ENCODE measurements at regions of chr18 and their contacts with region 1.

Region 1: GRCh38 chr18:34976899-34977837 is 64.0 kb upstream of the MAPRE2 start:
- DNase-seq: peak; percentile 62 to 74
- H3K4me3 ChIP-seq: peak overlapping the region; percentile 72
- H3K4me3 Mint-ChIP-seq: peak overlapping the region; percentile 77
- H3K27ac Mint-ChIP-seq: peak overlapping the region; percentile 48
- H3K4me1 ChIP-seq: no peaks in the 10 kb centered on the region
- H3K4me1 Mint-ChIP-seq: no peaks in the 10 kb centered on the region
- H3K27me3 ChIP-seq: no peaks in the 10 kb centered on the region
- H3K27me3 Mint-ChIP-seq: no peaks in the 10 kb centered on the region
- CTCF ChIP-seq: no peak

Region 2: GRCh38 chr18:34857320-34857719 is 119.8 kb before region 1 on chr18:
- CTCF ChIA-PET with region 1: no interaction called
- POLR2A ChIA-PET with region 1: no interaction called
- intact Hi-C with region 1: no loop called
- DNase-seq: no peak
- H3K4me3 ChIP-seq: no peak overlapping the region
- H3K4me3 Mint-ChIP-seq: no peak overlapping the region
- H3K27ac Mint-ChIP-seq: no peak overlapping the region
- H3K4me1 ChIP-seq: no peaks in the 10 kb centered on the region
- H3K4me1 Mint-ChIP-seq: no peaks in the 10 kb centered on the region
- H3K27me3 ChIP-seq: no peaks in the 10 kb centered on the region
- H3K27me3 Mint-ChIP-seq: no peaks in the 10 kb centered on the region
- CTCF ChIP-seq: no peak

Region 3: GRCh38 chr18:34880882-34881834 is 96.0 kb before region 1 on chr18:
- CTCF ChIA-PET with region 1: no interaction called
- POLR2A ChIA-PET with region 1: no interaction called
- intact Hi-C with region 1: loop called (anchors 1 kb)
- DNase-seq: no peak
- H3K4me3 ChIP-seq: no peak overlapping the region
- H3K4me3 Mint-ChIP-seq: no peak overlapping the region
- H3K27ac Mint-ChIP-seq: no peak overlapping the region
- H3K4me1 ChIP-seq: no peaks in the 10 kb centered on the region
- H3K4me1 Mint-ChIP-seq: no peaks in the 10 kb centered on the region
- H3K27me3 ChIP-seq: no peaks in the 10 kb centered on the region
- H3K27me3 Mint-ChIP-seq: no peaks in the 10 kb centered on the region
- CTCF ChIP-seq: peak in 1 of 2 experiments; percentile 18

Region 4: DNA sequence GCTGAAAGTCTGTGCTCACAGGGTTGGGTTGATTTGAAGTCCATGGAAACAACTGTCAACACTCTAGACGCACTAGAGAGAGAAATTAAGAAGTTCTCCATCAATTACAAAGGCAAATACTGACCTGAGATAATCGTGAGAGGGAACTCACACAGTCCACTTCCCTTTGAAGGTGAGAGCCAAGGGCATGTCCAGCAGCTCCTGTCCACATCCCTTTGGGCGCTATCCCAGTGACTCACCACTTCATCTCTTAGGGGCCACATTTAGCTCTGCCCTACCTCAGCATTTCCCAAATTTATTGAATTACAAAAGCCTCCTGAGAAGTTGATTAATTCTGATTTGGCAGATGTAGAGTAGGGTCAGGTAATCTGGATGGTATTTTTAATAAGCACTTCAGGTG is 84.8 kb before region 1 on chr18:
- CTCF ChIA-PET with region 1: no interaction called
- POLR2A ChIA-PET with region 1: no interaction called
- intact Hi-C with region 1: no loop called
- DNase-seq: no peak
- H3K4me3 ChIP-seq: no peak overlapping the region
- H3K4me3 Mint-ChIP-seq: no peak overlapping the region
- H3K27ac Mint-ChIP-seq: no peak overlapping the region
- H3K4me1 ChIP-seq: no peaks in the 10 kb centered on the region
- H3K4me1 Mint-ChIP-seq: no peaks in the 10 kb centered on the region
- H3K27me3 ChIP-seq: no peaks in the 10 kb centered on the region
- H3K27me3 Mint-ChIP-seq: no peaks in the 10 kb centered on the region
- CTCF ChIP-seq: no peak

Region 5: GRCh38 chr18:34912010-34912721 is 65.0 kb before region 1 on chr18:
- CTCF ChIA-PET with region 1: no interaction called
- POLR2A ChIA-PET with region 1: no interaction called
- intact Hi-C with region 1: loop called (anchors 2 kb)
- DNase-seq: peak; percentile 57 to 67
- H3K4me3 ChIP-seq: no peak overlapping the region
- H3K4me3 Mint-ChIP-seq: no peak overlapping the region
- H3K27ac Mint-ChIP-seq: peak overlapping the region; percentile 25
- H3K4me1 ChIP-seq: peaks cover 34% of the 10 kb centered on the region
- H3K4me1 Mint-ChIP-seq: no peaks in the 10 kb centered on the region
- H3K27me3 ChIP-seq: no peaks in the 10 kb centered on the region
- H3K27me3 Mint-ChIP-seq: no peaks in the 10 kb centered on the region
- CTCF ChIP-seq: peak in 1 of 2 experiments; percentile 2

Region 6: DNA sequence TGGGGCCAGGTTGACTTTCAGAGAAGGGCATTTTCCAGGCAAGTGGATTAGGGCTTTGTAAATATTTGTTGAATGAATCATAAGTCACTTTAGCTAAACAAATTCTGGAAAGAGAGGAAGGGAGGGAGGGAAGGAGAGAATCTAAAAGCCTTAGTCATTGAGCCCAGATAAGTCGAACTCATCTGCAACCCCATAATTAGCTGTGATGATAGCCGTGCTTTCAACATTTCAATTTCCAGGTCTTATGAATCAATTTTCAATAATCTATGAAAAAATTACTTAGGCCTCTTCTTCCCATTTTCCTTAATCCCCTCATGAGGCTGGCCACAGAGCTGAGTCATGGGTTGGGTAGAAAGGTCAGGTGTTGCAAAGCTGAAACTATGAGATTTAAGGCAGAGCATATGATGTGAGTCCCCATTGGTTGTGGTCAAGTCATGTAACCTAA is 47.8 kb before region 1 on chr18:
- CTCF ChIA-PET with region 1: no interaction called
- POLR2A ChIA-PET with region 1: no interaction called
- intact Hi-C with region 1: loop called (anchors 5 kb)
- DNase-seq: peak; percentile 32 to 36
- H3K4me3 ChIP-seq: no peak overlapping the region
- H3K4me3 Mint-ChIP-seq: peak overlapping the region; percentile 11
- H3K27ac Mint-ChIP-seq: no peak overlapping the region
- H3K4me1 ChIP-seq: peaks cover 20% of the 10 kb centered on the region
- H3K4me1 Mint-ChIP-seq: peaks cover 10% of the 10 kb centered on the region
- H3K27me3 ChIP-seq: no peaks in the 10 kb centered on the region
- H3K27me3 Mint-ChIP-seq: no peaks in the 10 kb centered on the region
- CTCF ChIP-seq: no peak

Region 7: DNA sequence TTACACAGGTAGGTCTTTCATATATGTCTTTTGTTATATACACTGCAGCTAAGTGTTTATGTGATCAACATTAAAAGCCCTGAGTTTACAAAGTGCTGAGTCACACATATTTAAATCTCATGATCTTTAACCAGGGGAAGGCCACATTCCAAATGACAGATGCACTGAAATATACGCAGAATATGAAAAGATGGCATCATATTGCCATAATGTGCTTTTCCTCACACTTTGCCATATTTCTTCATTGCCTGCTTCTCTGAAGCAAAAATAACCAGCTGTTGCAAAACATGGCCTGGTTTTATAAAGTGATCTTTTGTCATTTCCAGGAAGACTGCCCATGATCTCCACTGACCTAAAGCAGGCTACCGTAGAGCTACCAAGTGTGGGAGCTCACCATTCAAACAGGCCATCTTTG is 29.4 kb before region 1 on chr18:
- CTCF ChIA-PET with region 1: no interaction called
- POLR2A ChIA-PET with region 1: no interaction called
- intact Hi-C with region 1: loop called (anchors 1 kb)
- DNase-seq: no peak
- H3K4me3 ChIP-seq: no peak overlapping the region
- H3K4me3 Mint-ChIP-seq: no peak overlapping the region
- H3K27ac Mint-ChIP-seq: no peak overlapping the region
- H3K4me1 ChIP-seq: peaks cover 8% of the 10 kb centered on the region
- H3K4me1 Mint-ChIP-seq: peaks cover 5% of the 10 kb centered on the region
- H3K27me3 ChIP-seq: no peaks in the 10 kb centered on the region
- H3K27me3 Mint-ChIP-seq: no peaks in the 10 kb centered on the region
- CTCF ChIP-seq: no peak

Region 8: GRCh38 chr18:34957119-34957863 is 19.9 kb before region 1 on chr18:
- CTCF ChIA-PET with region 1: no interaction called
- POLR2A ChIA-PET with region 1: no interaction called
- intact Hi-C with region 1: loop called (anchors 1 kb)
- DNase-seq: no peak
- H3K4me3 ChIP-seq: no peak overlapping the region
- H3K4me3 Mint-ChIP-seq: no peak overlapping the region
- H3K27ac Mint-ChIP-seq: no peak overlapping the region
- H3K4me1 ChIP-seq: peaks cover 27% of the 10 kb centered on the region
- H3K4me1 Mint-ChIP-seq: peaks cover 20% of the 10 kb centered on the region
- H3K27me3 ChIP-seq: no peaks in the 10 kb centered on the region
- H3K27me3 Mint-ChIP-seq: no peaks in the 10 kb centered on the region
- CTCF ChIP-seq: no peak

Region 9: DNA sequence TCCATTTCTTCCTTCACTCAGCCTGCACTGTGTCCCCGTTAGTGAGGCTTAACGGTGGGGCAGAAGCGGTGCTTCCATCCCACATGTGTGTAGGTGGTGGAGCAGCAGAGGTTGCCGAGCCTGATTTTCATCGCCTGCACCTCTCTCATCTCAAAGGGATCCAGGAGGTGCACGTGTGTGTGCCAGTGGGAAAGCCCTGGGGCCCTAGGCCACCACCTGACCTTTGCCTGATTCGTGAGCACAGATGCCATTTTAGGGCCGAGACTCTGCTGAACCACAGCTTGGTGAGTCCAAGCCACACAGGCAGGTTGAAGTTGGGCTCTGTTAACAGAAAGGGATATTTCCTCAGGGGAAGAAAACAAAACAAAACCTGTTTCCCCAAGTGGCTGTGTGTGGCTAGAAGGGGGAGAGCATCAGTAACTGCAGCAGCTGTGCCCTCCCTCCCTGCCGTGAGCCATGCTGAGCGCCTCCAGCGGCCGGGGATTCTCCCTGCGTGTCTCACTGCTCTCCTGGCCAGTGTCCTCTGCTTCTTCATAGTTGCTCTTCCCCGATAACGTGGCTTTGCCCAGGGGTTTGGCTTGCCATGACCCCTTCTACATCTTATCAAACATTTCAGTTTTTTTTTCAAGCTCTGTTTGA is 145.5 kb after region 1 on chr18:
- CTCF ChIA-PET with region 1: no interaction called
- POLR2A ChIA-PET with region 1: no interaction called
- intact Hi-C with region 1: no loop called
- DNase-seq: no peak
- H3K4me3 ChIP-seq: no peak overlapping the region
- H3K4me3 Mint-ChIP-seq: no peak overlapping the region
- H3K27ac Mint-ChIP-seq: no peak overlapping the region
- H3K4me1 ChIP-seq: no peaks in the 10 kb centered on the region
- H3K4me1 Mint-ChIP-seq: no peaks in the 10 kb centered on the region
- H3K27me3 ChIP-seq: no peaks in the 10 kb centered on the region
- H3K27me3 Mint-ChIP-seq: no peaks in the 10 kb centered on the region
- CTCF ChIP-seq: no peak